Activated CD8-positive, alpha-beta T cell treated with anti-CD3 and anti-CD28 coated beads, Interleukin-2, amount 10 ng/mL, durations not matched to agents 7 days and 5 days (primary cell): ENCODE measurements at regions of chr1 and their contacts with region 1.

Region 1: GRCh38 chr1:168360151-168361021 is 79.7 kb downstream of the TBX19 start:
- DNase-seq: peak; percentile 66
- ATAC-seq: peak; percentile 48
- H3K4me3 Mint-ChIP-seq: no peak overlapping the region
- H3K27ac Mint-ChIP-seq: no peak overlapping the region
- H3K4me1 Mint-ChIP-seq: peaks cover 40% of the 10 kb centered on the region
- H3K27me3 Mint-ChIP-seq: peaks cover 2% of the 10 kb centered on the region

Region 2: GRCh38 chr1:168019407-168019806 is 341.0 kb before region 1 on chr1:
- CTCF ChIA-PET with region 1: no interaction called
- POLR2A ChIA-PET with region 1: no interaction called
- DNase-seq: no peak
- ATAC-seq: peak; percentile 39
- H3K4me3 Mint-ChIP-seq: no peak overlapping the region
- H3K27ac Mint-ChIP-seq: no peak overlapping the region
- H3K4me1 Mint-ChIP-seq: no peaks in the 10 kb centered on the region
- H3K27me3 Mint-ChIP-seq: no peaks in the 10 kb centered on the region

Region 3: GRCh38 chr1:168243636-168244212 is 116.7 kb before region 1 on chr1:
- CTCF ChIA-PET with region 1: no interaction called
- POLR2A ChIA-PET with region 1: no interaction called
- DNase-seq: peak; percentile 53
- ATAC-seq: peak; percentile 53
- H3K4me3 Mint-ChIP-seq: no peak overlapping the region
- H3K27ac Mint-ChIP-seq: peak overlapping the region; percentile 69
- H3K4me1 Mint-ChIP-seq: peaks cover 24% of the 10 kb centered on the region
- H3K27me3 Mint-ChIP-seq: no peaks in the 10 kb centered on the region

Region 4: DNA sequence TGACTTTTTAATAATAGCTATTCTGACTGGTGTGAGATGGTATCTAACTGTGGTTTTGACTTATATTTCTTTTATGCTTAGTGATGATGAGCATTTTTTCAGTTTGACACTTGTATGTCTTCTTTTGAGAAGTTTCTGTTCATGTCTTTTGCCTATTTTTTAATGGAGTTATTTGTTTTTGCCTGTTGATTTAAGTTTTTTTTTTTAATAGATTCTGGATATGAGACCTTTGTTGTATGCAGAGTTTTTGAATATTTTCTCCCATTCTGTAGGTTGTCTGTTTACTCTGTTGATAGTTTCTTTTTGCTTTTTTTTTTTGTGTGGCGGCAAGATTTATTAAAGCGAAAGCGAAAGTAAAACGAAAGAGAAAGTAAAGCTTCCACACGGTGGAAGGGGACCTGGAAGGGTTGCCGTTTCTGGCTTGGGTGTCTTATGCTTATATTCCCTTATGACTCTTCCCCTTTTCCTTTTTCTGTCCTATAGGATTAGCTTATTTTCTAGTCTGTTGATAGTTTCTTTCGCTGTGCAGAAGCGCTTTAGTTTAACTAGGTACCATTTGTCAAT is 12.2 kb before region 1 on chr1:
- CTCF ChIA-PET with region 1: interaction called, 280 read pairs
- POLR2A ChIA-PET with region 1: interaction called, 7 read pairs
- DNase-seq: peak; percentile 46
- ATAC-seq: peak; percentile 67
- H3K4me3 Mint-ChIP-seq: peak overlapping the region; percentile 82
- H3K27ac Mint-ChIP-seq: peak overlapping the region; percentile 91
- H3K4me1 Mint-ChIP-seq: peaks cover 24% of the 10 kb centered on the region
- H3K27me3 Mint-ChIP-seq: no peaks in the 10 kb centered on the region

Region 5: DNA sequence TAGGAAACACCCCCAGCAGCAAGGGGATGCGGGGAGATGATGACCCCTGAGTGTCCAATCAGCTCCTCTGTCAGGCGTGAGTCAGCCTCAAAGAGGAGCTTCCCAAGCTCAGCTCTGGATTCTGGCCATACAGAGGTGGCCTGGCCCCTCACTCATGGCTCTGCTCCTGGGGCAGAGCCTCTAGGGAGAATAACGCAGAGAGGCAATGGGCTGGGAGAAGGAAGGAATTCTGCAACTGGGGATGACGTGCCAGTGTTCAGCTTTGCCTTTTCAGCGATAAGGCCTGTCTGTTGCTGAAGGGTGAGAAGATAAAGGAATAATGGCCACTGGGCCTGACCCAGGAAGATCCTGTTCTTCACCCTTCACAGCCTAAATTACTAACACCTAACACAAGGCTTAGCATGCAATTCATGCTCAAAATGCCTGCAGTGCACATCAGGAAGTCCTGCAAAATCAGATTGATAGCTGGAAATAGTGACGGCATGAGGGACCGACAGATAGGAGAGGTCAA is 12.5 kb after region 1 on chr1:
- CTCF ChIA-PET with region 1: interaction called, 10 read pairs
- POLR2A ChIA-PET with region 1: interaction called, 4 read pairs
- DNase-seq: no peak
- ATAC-seq: no peak
- H3K4me3 Mint-ChIP-seq: no peak overlapping the region
- H3K27ac Mint-ChIP-seq: no peak overlapping the region
- H3K4me1 Mint-ChIP-seq: no peaks in the 10 kb centered on the region
- H3K27me3 Mint-ChIP-seq: peaks cover 14% of the 10 kb centered on the region

Region 6: GRCh38 chr1:168408536-168409242 is 48.3 kb after region 1 on chr1:
- CTCF ChIA-PET with region 1: interaction called, 13 read pairs
- POLR2A ChIA-PET with region 1: no interaction called
- DNase-seq: peak; percentile 74
- ATAC-seq: peak; percentile 90
- H3K4me3 Mint-ChIP-seq: peak overlapping the region; percentile 30
- H3K27ac Mint-ChIP-seq: peak overlapping the region; percentile 78
- H3K4me1 Mint-ChIP-seq: peaks cover 43% of the 10 kb centered on the region
- H3K27me3 Mint-ChIP-seq: no peaks in the 10 kb centered on the region